Activated T-helper 1 cell treated with anti-CD3 and anti-CD28 coated beads, Interleukin-12 subunit alpha, Interleukin-12 subunit beta, Interleukin-2, Interleukin-4 antibody, amounts not matched to agents 30 ng/mL and 10 ng/mL and 1 ng/mL, durations not matched to agents 14 hours and 24 hours and 36 hours (primary cell): ENCODE measurements at regions of chr11 and their contacts with region 1.

Region 1: GRCh38 chr11:5791165-5791564 is at the start of gene OR52N1:
- DNase-seq: no peak
- H3K4me3 Mint-ChIP-seq: no peak within 1 kb of the TSS
- H3K27ac Mint-ChIP-seq: no peak within 1 kb of the TSS
- H3K4me1 Mint-ChIP-seq: no peaks in the 10 kb centered on the region
- H3K27me3 Mint-ChIP-seq: peaks cover 15% of the 10 kb centered on the region
- total RNA-seq, gene OR52N1: not detected in 2 replicates

Region 2: DNA sequence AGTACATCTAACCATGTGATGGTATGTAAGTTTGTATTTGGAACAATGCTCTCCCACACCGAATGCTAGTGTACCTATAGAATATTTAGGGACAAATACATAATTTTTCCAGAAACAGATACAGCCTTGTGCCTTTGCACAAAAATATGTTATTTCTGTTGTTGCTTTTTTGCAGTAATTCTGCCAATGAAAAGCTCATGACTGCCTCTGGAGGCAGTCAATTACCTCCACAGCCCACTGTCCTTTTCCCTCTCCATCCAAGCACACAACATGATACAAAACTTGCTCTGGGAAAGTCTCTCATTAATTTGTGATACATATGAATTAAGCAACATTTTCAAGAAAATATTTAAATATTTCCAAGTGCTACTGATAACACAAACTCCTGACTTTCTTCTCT is 338.5 kb before region 1 on chr11:
- intact Hi-C with region 1: no loop called
- DNase-seq: no peak
- H3K4me3 Mint-ChIP-seq: no peak overlapping the region
- H3K27ac Mint-ChIP-seq: no peak overlapping the region
- H3K4me1 Mint-ChIP-seq: no peaks in the 10 kb centered on the region
- H3K27me3 Mint-ChIP-seq: peaks cover 3% of the 10 kb centered on the region

Region 3: GRCh38 chr11:5522308-5522707 is 268.9 kb before region 1 on chr11:
- intact Hi-C with region 1: no loop called
- DNase-seq: no peak
- H3K4me3 Mint-ChIP-seq: no peak overlapping the region
- H3K27ac Mint-ChIP-seq: no peak overlapping the region
- H3K4me1 Mint-ChIP-seq: no peaks in the 10 kb centered on the region
- H3K27me3 Mint-ChIP-seq: peaks cover 7% of the 10 kb centered on the region

Region 4: DNA sequence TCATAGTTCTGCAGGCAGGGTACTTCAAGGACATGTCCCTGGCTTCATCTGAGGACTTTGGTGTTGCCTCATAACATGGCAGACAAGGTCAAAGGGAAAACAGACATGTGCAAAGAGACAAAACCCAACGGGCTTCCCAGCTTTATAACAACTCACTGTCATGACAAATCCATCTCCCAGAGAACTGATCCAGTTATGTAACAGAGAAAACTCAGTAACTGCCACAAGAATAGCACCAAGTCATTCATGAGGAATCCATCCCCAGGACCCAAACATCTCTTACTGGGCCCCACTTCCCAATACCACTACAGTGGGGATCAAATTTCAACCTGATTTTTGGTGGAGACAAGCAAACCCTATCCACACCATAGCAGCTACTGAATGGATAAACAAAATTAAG is 24.1 kb before region 1 on chr11:
- intact Hi-C with region 1: loop called (anchors 1 kb)
- DNase-seq: no peak
- H3K4me3 Mint-ChIP-seq: no peak overlapping the region
- H3K27ac Mint-ChIP-seq: no peak overlapping the region
- H3K4me1 Mint-ChIP-seq: no peaks in the 10 kb centered on the region
- H3K27me3 Mint-ChIP-seq: no peaks in the 10 kb centered on the region

Region 5: DNA sequence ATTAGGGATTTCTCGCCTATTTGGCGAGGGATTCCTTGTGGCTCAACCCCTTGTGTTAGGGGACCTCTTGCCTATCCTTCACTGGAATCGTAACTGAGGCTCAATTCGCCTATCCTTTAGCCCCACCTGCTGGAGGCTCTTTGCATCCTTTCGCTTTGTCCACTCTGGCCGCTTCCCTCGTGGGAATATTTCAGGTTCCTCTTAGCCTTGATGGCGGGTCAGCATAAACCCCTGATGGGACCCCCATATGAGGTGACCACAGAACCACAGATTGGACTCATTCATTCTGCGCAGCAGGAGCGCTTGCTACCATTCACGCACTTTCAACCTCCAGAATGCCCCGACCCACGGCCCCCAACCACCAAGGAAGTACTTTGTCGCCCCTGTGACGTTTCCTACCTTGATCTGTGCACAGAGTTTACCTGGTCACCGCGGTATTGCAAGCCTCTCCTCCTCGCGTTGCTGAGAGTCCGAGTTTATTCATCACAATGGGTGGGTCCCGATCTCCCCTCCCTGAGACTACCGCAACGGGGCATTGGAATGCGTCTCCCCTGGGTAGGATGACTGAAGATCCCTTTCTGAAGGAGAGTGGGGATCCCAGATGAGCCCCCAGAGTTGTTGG is 17.4 kb after region 1 on chr11 and contains the start of gene OR52N2:
- intact Hi-C with region 1: no loop called
- DNase-seq: peak; percentile 56
- H3K4me3 Mint-ChIP-seq: peak within 1 kb of the TSS; percentile 85
- H3K27ac Mint-ChIP-seq: no peak within 1 kb of the TSS
- H3K4me1 Mint-ChIP-seq: peaks cover 15% of the 10 kb centered on the region
- H3K27me3 Mint-ChIP-seq: peaks cover 20% of the 10 kb centered on the region
- total RNA-seq, gene OR52N2: not detected in 2 replicates